ENCODE measurements at regions of chr2 and their contacts with region 1.

Region 1: DNA sequence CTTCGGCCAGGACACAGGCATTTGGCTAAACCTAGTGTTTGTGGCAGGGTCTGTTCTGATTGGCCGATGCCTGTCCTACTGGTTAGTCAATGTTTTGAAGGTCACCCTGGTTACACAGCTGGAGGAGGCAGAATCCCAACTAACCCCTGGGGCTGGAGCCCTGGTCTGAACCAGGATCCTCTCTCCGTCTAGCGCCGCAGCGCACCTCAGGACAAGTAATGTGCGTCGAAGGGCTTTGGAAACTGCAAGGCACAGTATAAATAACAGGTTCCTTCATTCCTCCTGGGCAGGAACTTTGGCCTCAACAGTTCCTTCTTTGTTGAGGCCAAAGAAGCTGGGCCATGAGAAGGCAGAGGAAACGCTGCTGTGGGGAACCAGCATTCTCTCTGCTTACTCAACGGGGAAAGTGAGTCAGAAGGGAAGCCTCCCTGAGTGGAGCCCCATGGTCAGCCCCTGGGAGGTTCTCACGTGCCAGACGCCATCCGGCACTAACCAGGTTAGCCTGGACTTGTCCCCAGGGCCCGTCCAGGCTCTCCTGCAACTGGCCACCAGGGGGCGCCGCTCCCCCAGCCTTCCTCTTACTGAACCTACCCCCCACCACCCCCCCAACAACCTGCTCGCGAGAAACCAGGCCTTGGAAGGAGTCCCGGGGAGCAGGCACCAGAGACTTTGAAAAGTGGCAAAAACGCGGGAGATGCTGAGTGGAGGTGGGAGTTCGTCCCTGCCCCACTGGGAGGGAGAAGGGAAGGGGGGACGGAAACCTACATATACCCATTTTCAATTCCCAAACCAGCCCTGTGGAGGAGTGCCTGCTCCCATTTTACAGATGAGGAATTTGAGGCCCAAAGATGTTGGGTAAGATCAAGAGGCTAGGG is 19.8 kb downstream of the TEX44 start:
- DNase-seq: peak; percentile 94 to 96
- H3K4me3 ChIP-seq: no peak overlapping the region
- H3K27ac ChIP-seq: peak overlapping the region; percentile 98 to 99 (median 99)
- H3K4me1 ChIP-seq: peaks cover 24 to 40% of the 10 kb centered on the region in 2 donors
- H3K27me3 ChIP-seq: no peaks in the 10 kb centered on the region
- CTCF ChIP-seq: peak; percentile 90 to 98 (median 96)
- POLR2A ChIP-seq: peak in 1 of 2 donors; percentile 27

Region 2: GRCh38 chr2:231674587-231675338 is 62.3 kb after region 1 on chr2:
- intact Hi-C with region 1: loop called (anchors 2 kb)
- DNase-seq: peak; percentile 76 to 79
- H3K4me3 ChIP-seq: no peak overlapping the region
- H3K27ac ChIP-seq: peak overlapping the region; percentile 81 to 94 (median 94)
- H3K4me1 ChIP-seq: peaks cover 32 to 53% of the 10 kb centered on the region in 2 donors
- H3K27me3 ChIP-seq: no peaks in the 10 kb centered on the region
- CTCF ChIP-seq: peak; percentile 60 to 91 (median 84)
- POLR2A ChIP-seq: no peak

Region 3: GRCh38 chr2:231713730-231714430 is 101.5 kb after region 1 on chr2:
- intact Hi-C with region 1: loop called (anchors 2 kb)
- DNase-seq: peak; percentile 92 to 93
- H3K4me3 ChIP-seq: no peak overlapping the region
- H3K27ac ChIP-seq: peak overlapping the region; percentile 37 to 83 (median 64)
- H3K4me1 ChIP-seq: peaks cover 24 to 31% of the 10 kb centered on the region in 2 donors
- H3K27me3 ChIP-seq: no peaks in the 10 kb centered on the region
- CTCF ChIP-seq: peak; percentile 66 to 95 (median 92)
- POLR2A ChIP-seq: peak in 1 of 2 donors; percentile 12

Region 4: GRCh38 chr2:232097260-232097659 is 484.8 kb after region 1 on chr2:
- intact Hi-C with region 1: no loop called
- DNase-seq: no peak
- H3K4me3 ChIP-seq: no peak overlapping the region
- H3K27ac ChIP-seq: no peak overlapping the region
- H3K4me1 ChIP-seq: no peaks in the 10 kb centered on the region
- H3K27me3 ChIP-seq: no peaks in the 10 kb centered on the region
- CTCF ChIP-seq: no peak
- POLR2A ChIP-seq: no peak